Activated T-helper 1 cell treated with anti-CD3 and anti-CD28 coated beads, Interleukin-12 subunit alpha, Interleukin-12 subunit beta, Interleukin-2, Interleukin-4 antibody, amounts not matched to agents 30 ng/mL and 10 ng/mL and 1 ng/mL, durations not matched to agents 14 hours and 24 hours and 36 hours (primary cell): ENCODE measurements at regions of chr15 and their contacts with region 1.

Region 1: GRCh38 chr15:101294731-101295606 is at the start of gene SNRPA1:
- DNase-seq: peak; percentile 97
- H3K4me3 Mint-ChIP-seq: peak within 1 kb of the TSS; percentile 100
- H3K27ac Mint-ChIP-seq: peak within 1 kb of the TSS; percentile 100
- H3K4me1 Mint-ChIP-seq: peaks cover 45% of the 10 kb centered on the region
- H3K27me3 Mint-ChIP-seq: peaks cover 2% of the 10 kb centered on the region
- total RNA-seq, gene SNRPA1: 176 and 184 TPM in 2 replicates

Region 2: DNA sequence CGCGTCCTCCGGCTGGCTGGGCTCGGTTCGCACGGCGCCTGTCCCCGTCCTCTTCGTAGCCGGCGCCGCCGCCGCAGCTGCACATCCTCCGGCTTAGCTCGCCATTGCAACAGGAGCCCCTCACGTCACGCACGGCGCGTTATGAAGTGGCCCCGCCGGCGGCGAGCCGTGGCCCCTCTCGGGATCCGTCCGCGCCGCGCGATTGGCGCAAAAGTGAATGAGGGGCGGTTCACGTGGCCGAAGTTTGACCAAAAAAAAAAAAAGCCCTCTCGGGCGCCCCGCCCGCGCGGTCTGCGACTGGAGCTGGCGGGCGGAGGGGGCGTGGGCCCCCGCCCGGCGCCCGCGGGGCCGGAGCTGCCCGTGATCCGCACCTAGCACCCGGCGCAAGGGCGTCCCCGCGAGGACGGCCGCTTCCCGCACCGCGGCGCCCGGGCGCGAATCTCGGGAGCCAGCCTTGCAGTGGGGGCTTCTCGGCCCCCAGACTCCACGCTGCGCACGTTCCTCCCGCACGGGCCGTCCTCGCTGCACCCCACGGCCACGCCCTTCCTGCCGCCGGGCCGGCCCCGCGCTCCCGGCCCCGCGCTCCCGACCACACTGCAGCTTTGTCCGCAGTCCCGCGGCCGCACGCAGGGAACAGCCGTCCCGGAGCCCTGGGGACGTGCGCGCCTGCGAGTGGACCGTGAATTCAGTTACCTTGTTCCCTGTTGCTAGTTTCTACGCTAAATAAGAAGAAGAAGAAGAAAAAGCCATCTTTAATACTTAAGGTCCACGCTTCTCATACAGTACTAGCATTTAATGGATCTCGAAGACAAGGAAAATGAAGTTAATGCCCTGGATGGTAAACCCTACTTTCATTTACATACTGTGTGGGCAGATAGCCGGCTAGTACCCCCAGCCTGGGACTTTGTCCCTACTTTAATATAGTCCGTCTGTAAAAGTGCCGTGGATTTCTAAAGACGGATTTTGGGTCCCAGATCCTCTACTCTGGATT is 42.8 kb before region 1 on chr15 and contains the start of gene CHSY1:
- intact Hi-C with region 1: loop called (anchors 1 kb)
- DNase-seq: peak; percentile 88
- H3K4me3 Mint-ChIP-seq: peak within 1 kb of the TSS; percentile 91
- H3K27ac Mint-ChIP-seq: peak within 1 kb of the TSS; percentile 90
- H3K4me1 Mint-ChIP-seq: peaks cover 69% of the 10 kb centered on the region
- H3K27me3 Mint-ChIP-seq: no peaks in the 10 kb centered on the region
- total RNA-seq, gene CHSY1: 76.3 and 78.0 TPM in 2 replicates

Region 3: DNA sequence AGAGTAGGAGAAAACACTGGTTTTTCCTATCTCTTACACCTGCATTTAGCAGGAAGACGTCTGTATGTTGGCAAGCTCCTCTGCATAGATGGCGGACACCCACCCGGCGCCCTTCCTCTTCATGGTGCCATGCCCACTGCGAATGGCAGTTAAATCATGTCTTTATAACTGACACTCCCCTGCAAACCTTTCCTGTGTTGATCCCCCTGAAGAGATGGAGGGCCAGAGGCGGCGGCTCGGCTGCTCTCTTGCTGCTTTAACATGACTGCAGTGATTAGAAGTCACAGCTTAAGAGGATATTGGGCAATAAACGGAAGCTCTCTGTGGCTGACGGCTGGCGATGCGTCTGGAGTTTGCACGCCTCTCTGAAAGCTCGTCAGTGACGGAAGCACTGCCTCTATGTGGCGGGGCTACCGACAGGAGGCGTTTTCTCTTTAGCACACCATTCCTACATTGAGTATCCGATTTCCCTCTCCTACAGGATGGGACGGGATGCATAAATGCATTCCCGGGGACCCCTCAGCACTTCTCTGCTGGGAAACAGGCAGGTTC is 25.6 kb after region 1 on chr15:
- intact Hi-C with region 1: loop called (anchors 2 kb)
- DNase-seq: peak; percentile 62
- H3K4me3 Mint-ChIP-seq: peak overlapping the region; percentile 74
- H3K27ac Mint-ChIP-seq: peak overlapping the region; percentile 88
- H3K4me1 Mint-ChIP-seq: peaks cover 13% of the 10 kb centered on the region
- H3K27me3 Mint-ChIP-seq: peaks cover 7% of the 10 kb centered on the region

Region 4: GRCh38 chr15:101501703-101502373 is 206.9 kb after region 1 on chr15:
- intact Hi-C with region 1: loop called (anchors 1 kb)
- DNase-seq: peak; percentile 21
- H3K4me3 Mint-ChIP-seq: peak overlapping the region; percentile 24
- H3K27ac Mint-ChIP-seq: peak overlapping the region; percentile 54
- H3K4me1 Mint-ChIP-seq: peaks cover 27% of the 10 kb centered on the region
- H3K27me3 Mint-ChIP-seq: peaks cover 4% of the 10 kb centered on the region

Region 5: DNA sequence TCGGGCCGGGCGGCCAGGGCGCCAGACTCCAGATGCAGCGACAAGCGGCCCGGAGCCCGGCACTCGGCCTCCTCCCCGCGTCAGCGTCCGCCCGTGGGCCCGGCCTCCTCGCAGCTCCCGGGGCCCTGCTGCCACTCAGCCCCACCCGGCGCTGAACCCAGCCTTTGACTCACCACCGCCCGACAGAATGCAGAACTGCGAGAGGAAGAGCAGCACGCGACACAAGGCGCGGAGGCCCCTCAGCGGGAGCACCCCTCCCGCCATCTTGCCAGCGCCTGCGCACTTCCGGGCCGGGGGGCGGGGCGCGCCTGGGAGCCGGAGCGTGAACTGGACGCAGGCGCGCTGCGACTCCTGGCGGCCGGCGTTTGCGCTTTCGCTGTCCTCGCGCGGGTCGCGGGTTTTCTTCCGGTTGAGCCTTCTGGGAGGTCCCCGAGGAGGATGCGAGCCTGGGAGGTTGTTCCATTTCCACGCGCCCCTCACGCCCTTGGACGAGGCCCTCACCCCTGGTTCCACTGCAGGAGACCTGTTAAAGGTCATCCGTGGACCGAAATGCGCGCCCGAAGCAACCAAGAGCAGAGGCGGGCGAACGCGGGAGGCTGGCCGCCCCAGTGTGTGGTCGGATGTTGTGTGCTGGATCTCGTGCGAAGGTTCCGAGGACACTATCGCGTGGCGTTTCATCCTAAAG is 357.3 kb after region 1 on chr15 and contains the start of gene TM2D3:
- intact Hi-C with region 1: loop called (anchors 1 kb)
- DNase-seq: peak; percentile 94
- H3K4me3 Mint-ChIP-seq: peak within 1 kb of the TSS; percentile 93
- H3K27ac Mint-ChIP-seq: peak within 1 kb of the TSS; percentile 93
- H3K4me1 Mint-ChIP-seq: peaks cover 36% of the 10 kb centered on the region
- H3K27me3 Mint-ChIP-seq: no peaks in the 10 kb centered on the region
- total RNA-seq, gene TM2D3: 57.1 and 62.4 TPM in 2 replicates